CD4-positive, alpha-beta T cell (primary cell): ENCODE measurements at regions of chr22 and their contacts with region 1.

Region 1: DNA sequence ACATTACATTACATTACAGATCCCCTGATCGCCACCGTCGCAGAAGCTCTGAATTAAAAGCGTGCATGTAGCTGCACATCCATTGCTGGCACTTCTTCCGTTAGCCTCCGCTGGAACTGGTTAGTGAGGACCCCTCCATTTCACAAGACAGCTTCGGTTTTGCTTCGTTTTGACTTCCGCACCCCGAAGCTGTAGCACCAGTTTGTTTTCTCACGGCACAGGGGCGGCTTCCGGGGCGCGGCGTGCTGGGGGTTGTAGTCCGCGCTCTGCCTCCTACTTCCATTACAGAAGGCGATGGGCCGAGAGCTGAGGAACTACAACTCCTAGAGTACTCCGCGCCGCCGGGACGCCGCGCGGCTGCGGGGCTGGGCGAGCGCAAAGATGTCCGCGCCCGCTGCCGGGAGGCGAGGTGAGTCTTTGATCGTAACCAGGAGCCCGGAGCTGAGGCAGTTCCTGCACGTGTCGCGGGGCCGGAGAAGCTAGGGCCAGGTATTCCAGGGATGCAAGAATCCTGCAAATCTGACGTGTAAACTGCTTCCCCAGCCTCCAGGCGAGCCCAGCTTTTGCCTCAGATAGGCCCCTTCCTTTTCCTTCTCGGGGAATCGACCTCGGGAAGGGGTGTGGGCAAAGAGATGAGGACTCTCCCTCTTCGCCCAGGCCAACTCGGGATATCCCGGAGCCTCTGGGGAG is at the start of gene PEX26:
- DNase-seq: peak; percentile 91 to 97 (median 93)
- ATAC-seq: peak; percentile 98
- H3K4me3 ChIP-seq: peak within 1 kb of the TSS; percentile 97
- H3K4me3 Mint-ChIP-seq: peak within 1 kb of the TSS; percentile 94
- H3K27ac ChIP-seq: peak within 1 kb of the TSS; percentile 62 to 86
- H3K27ac Mint-ChIP-seq: peak within 1 kb of the TSS; percentile 94
- H3K4me1 ChIP-seq: peaks cover 29% of the 10 kb centered on the region
- H3K4me1 Mint-ChIP-seq: peaks cover 62% of the 10 kb centered on the region
- H3K27me3 ChIP-seq: no peaks in the 10 kb centered on the region
- H3K27me3 Mint-ChIP-seq: no peaks in the 10 kb centered on the region
- CTCF ChIP-seq: no peak
- total RNA-seq, gene PEX26: 19.6 to 20.8 TPM

Region 2: DNA sequence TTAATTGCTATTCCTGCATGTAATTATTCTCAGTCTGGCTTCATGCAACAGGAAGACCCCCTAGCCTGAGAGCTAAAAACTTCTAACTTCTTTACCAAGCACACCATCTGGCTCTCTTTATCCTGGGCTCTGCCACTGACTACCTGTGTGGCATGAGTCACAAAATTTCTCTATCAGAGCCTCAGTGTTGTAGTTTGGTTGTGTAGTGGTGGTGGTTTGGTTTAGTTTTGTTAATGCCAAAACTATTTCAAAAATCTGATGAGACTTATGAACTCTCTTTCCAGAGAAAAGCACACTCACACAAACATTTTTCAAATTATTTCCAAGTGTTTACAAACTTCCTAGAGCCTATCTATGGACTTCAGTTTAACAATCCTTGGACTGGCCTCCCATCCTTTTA is 1000.5 kb before region 1 on chr22:
- CTCF ChIA-PET with region 1: no interaction called
- POLR2A ChIA-PET with region 1: no interaction called
- intact Hi-C with region 1: loop called (anchors 5 kb)
- DNase-seq: no peak
- ATAC-seq: no peak
- H3K4me3 ChIP-seq: no peak overlapping the region
- H3K4me3 Mint-ChIP-seq: no peak overlapping the region
- H3K27ac ChIP-seq: no peak overlapping the region
- H3K27ac Mint-ChIP-seq: no peak overlapping the region
- H3K4me1 ChIP-seq: peaks cover 11% of the 10 kb centered on the region
- H3K4me1 Mint-ChIP-seq: peaks cover 17% of the 10 kb centered on the region
- H3K27me3 ChIP-seq: no peaks in the 10 kb centered on the region
- H3K27me3 Mint-ChIP-seq: no peaks in the 10 kb centered on the region
- CTCF ChIP-seq: no peak

Region 3: GRCh38 chr22:17628304-17629166 is 449.2 kb before region 1 on chr22 and contains the start of gene ATP6V1E1:
- CTCF ChIA-PET with region 1: no interaction called
- POLR2A ChIA-PET with region 1: no interaction called
- intact Hi-C with region 1: loop called in 1 of 2 experiments (anchors 1 kb)
- DNase-seq: peak; percentile 88 to 98 (median 92)
- ATAC-seq: peak; percentile 100
- H3K4me3 ChIP-seq: peak within 1 kb of the TSS; percentile 93
- H3K4me3 Mint-ChIP-seq: peak within 1 kb of the TSS; percentile 92
- H3K27ac ChIP-seq: peak within 1 kb of the TSS; percentile 82 to 93
- H3K27ac Mint-ChIP-seq: peak within 1 kb of the TSS; percentile 93
- H3K4me1 ChIP-seq: peaks cover 32% of the 10 kb centered on the region
- H3K4me1 Mint-ChIP-seq: peaks cover 28% of the 10 kb centered on the region
- H3K27me3 ChIP-seq: no peaks in the 10 kb centered on the region
- H3K27me3 Mint-ChIP-seq: no peaks in the 10 kb centered on the region
- CTCF ChIP-seq: no peak
- total RNA-seq, gene ATP6V1E1: 48.4 to 50.8 TPM

Region 4: DNA sequence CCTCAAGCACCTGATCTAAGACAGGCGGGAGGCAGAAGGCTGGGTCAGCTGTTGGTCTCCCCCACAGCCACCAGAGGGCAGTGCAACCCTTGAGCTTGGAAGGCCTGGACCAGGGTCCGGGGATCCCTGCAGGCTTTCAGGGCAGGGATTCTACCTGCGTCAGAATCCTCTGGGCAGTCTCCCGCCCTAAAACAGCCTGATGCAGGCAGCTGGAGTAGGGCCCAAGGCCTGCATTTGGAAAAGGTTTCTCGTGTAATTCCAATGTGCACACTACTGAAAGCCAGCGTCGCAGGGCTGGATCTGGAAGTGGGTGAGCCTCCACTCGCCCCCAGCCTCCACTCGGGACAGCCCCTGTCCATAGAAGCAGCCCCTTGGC is 335.3 kb before region 1 on chr22:
- CTCF ChIA-PET with region 1: interaction called, 10 read pairs
- POLR2A ChIA-PET with region 1: interaction called, 5 read pairs
- intact Hi-C with region 1: loop called (anchors 1 to 5 kb)
- DNase-seq: peak; percentile 47 to 85 (median 59)
- ATAC-seq: peak; percentile 87
- H3K4me3 ChIP-seq: no peak overlapping the region
- H3K4me3 Mint-ChIP-seq: no peak overlapping the region
- H3K27ac ChIP-seq: no peak overlapping the region
- H3K27ac Mint-ChIP-seq: no peak overlapping the region
- H3K4me1 ChIP-seq: peaks cover 8% of the 10 kb centered on the region
- H3K4me1 Mint-ChIP-seq: peaks cover 7% of the 10 kb centered on the region
- H3K27me3 ChIP-seq: no peaks in the 10 kb centered on the region
- H3K27me3 Mint-ChIP-seq: no peaks in the 10 kb centered on the region
- CTCF ChIP-seq: peak; percentile 82

Region 5: GRCh38 chr22:17830043-17830961 is 247.5 kb before region 1 on chr22:
- CTCF ChIA-PET with region 1: interaction called, 50 read pairs
- POLR2A ChIA-PET with region 1: interaction called, 10 read pairs
- intact Hi-C with region 1: loop called in 1 of 2 experiments (anchors 1 kb)
- DNase-seq: peak; percentile 66 to 89 (median 78)
- ATAC-seq: peak; percentile 97
- H3K4me3 ChIP-seq: no peak overlapping the region
- H3K4me3 Mint-ChIP-seq: no peak overlapping the region
- H3K27ac ChIP-seq: no peak overlapping the region
- H3K27ac Mint-ChIP-seq: no peak overlapping the region
- H3K4me1 ChIP-seq: peaks cover 8% of the 10 kb centered on the region
- H3K4me1 Mint-ChIP-seq: peaks cover 8% of the 10 kb centered on the region
- H3K27me3 ChIP-seq: no peaks in the 10 kb centered on the region
- H3K27me3 Mint-ChIP-seq: no peaks in the 10 kb centered on the region
- CTCF ChIP-seq: peak; percentile 99

Region 6: GRCh38 chr22:18091916-18092526 is 14.2 kb after region 1 on chr22:
- CTCF ChIA-PET with region 1: interaction called, 5 read pairs
- POLR2A ChIA-PET with region 1: interaction called, 10 read pairs
- intact Hi-C with region 1: no loop called
- DNase-seq: peak in 12 of 14 experiments; percentile 12 to 76 (median 36)
- ATAC-seq: peak; percentile 81
- H3K4me3 ChIP-seq: peak overlapping the region; percentile 52
- H3K4me3 Mint-ChIP-seq: peak overlapping the region; percentile 87
- H3K27ac ChIP-seq: peak overlapping the region in 1 of 2 donors; percentile 75
- H3K27ac Mint-ChIP-seq: peak overlapping the region; percentile 93
- H3K4me1 ChIP-seq: peaks cover 28% of the 10 kb centered on the region
- H3K4me1 Mint-ChIP-seq: peaks cover 19% of the 10 kb centered on the region
- H3K27me3 ChIP-seq: no peaks in the 10 kb centered on the region
- H3K27me3 Mint-ChIP-seq: no peaks in the 10 kb centered on the region
- CTCF ChIP-seq: no peak